Left lung (tissue), 14 donors: ENCODE measurements at regions of chr17 and their contacts with region 1.

Region 1: GRCh38 chr17:31269578-31269983 is 27.5 kb downstream of the OMG start:
- DNase-seq: peak in 1 of 4 donors; percentile 13
- ATAC-seq: peak; percentile 77
- H3K4me3 ChIP-seq: no peak overlapping the region
- H3K27ac ChIP-seq: peak overlapping the region; percentile 21 to 45
- H3K4me1 ChIP-seq: peaks cover 15 to 17% of the 10 kb centered on the region in 2 donors
- H3K27me3 ChIP-seq: no peaks in the 10 kb centered on the region
- CTCF ChIP-seq: no peak

Region 2: GRCh38 chr17:31321481-31321880 is 51.9 kb after region 1 on chr17 and contains the start of gene EVI2A:
- intact Hi-C with region 1: loop called in 1 of 2 experiments (anchors 10 kb)
- DNase-seq: peak in 2 of 4 donors; percentile 11 to 72
- ATAC-seq: peak; percentile 77
- H3K4me3 ChIP-seq: peak within 1 kb of the TSS; percentile 3 to 33
- H3K27ac ChIP-seq: peak within 1 kb of the TSS; percentile 82 to 90
- H3K4me1 ChIP-seq: peaks cover 0 to 42% of the 10 kb centered on the region in 2 donors
- H3K27me3 ChIP-seq: no peaks in the 10 kb centered on the region
- CTCF ChIP-seq: no peak
- polyA plus RNA-seq, gene EVI2A: 1.9 to 4.0 (median 2.4) TPM